HEK293T (cell line): ENCODE measurements at regions of chr1 and their contacts with region 1.

Region 1: GRCh38 chr1:25796811-25797458 is 3.1 kb upstream of the SELENON start:
- DNase-seq: peak; percentile 76

Region 2: DNA sequence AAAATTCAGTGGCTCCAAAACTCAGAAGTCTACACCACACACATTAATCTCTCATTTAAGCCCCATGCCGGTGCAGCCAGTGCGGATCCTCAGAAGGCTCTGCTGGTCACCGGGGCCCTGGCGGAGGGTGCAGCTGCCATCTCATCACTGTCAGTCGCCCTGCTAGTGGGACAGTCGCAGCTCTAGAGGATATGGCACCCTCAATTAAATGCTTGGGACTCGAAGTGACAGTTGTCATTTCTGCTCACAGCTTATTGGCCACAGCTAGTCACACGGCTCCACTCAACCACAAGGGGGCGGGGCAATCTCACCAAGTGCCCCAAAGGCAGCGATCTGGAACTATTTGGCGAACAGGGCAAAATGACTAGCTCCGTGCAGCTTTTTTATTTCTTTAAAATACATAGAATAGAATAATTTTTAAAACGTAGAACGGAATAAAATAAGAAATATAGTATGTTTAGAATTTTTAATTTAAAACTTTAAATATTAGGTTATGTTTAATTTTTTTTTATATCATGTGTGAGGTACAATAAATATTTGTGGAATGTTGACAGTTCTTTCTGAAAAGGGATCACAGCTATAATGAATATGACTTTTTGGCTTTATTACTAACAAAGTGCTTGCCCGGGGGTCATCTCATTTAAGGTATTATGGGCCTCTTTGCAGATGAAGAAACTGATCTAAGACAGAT is 188.3 kb before region 1 on chr1:
- CTCF ChIA-PET with region 1: interaction called, 13 read pairs
- POLR2A ChIA-PET with region 1: interaction called, 3 read pairs
- DNase-seq: peak; percentile 80

Region 3: GRCh38 chr1:25810341-25811299 is 13.7 kb after region 1 on chr1:
- CTCF ChIA-PET with region 1: no interaction called
- POLR2A ChIA-PET with region 1: interaction called, 14 read pairs
- DNase-seq: peak; percentile 77

Region 4: GRCh38 chr1:25848531-25848930 is 51.6 kb after region 1 on chr1:
- CTCF ChIA-PET with region 1: no interaction called
- POLR2A ChIA-PET with region 1: no interaction called
- DNase-seq: no peak